Mammary epithelial cell (primary cell): ENCODE measurements at regions of chr6 and their contacts with region 1.

Region 1: GRCh38 chr6:98764373-98764911 is 69.9 kb upstream of the POU3F2 start:
- DNase-seq: no peak
- H3K4me3 ChIP-seq: peak overlapping the region in 1 of 3 experiments; percentile 17
- H3K27ac ChIP-seq: no peak overlapping the region
- H3K4me1 ChIP-seq: no peaks in the 10 kb centered on the region
- H3K27me3 ChIP-seq: no peaks in the 10 kb centered on the region
- CTCF ChIP-seq: no peak

Region 2: GRCh38 chr6:98641949-98642348 is 122.5 kb before region 1 on chr6:
- CTCF ChIA-PET with region 1: interaction called, 33 read pairs
- dilution Hi-C with region 1: no loop called
- in situ Hi-C with region 1: no loop called
- intact Hi-C with region 1: no loop called
- DNase-seq: peak; percentile 5
- H3K4me3 ChIP-seq: no peak overlapping the region
- H3K27ac ChIP-seq: no peak overlapping the region
- H3K4me1 ChIP-seq: no peaks in the 10 kb centered on the region
- H3K27me3 ChIP-seq: no peaks in the 10 kb centered on the region
- CTCF ChIP-seq: no peak

Region 3: GRCh38 chr6:99026135-99026534 is 261.7 kb after region 1 on chr6:
- CTCF ChIA-PET with region 1: no interaction called
- dilution Hi-C with region 1: no loop called
- in situ Hi-C with region 1: no loop called
- intact Hi-C with region 1: no loop called
- DNase-seq: peak; percentile 80
- H3K4me3 ChIP-seq: no peak overlapping the region
- H3K27ac ChIP-seq: no peak overlapping the region
- H3K4me1 ChIP-seq: no peaks in the 10 kb centered on the region
- H3K27me3 ChIP-seq: no peaks in the 10 kb centered on the region
- CTCF ChIP-seq: no peak